Left ventricle myocardium superior (tissue), 1 donor: ENCODE measurements at regions of chr12 and their contacts with region 1.

Region 1: GRCh38 chr12:59431266-59431665 is 164.6 kb upstream of the SLC16A7 start:
- DNase-seq: no peak
- ATAC-seq: no peak

Region 2: DNA sequence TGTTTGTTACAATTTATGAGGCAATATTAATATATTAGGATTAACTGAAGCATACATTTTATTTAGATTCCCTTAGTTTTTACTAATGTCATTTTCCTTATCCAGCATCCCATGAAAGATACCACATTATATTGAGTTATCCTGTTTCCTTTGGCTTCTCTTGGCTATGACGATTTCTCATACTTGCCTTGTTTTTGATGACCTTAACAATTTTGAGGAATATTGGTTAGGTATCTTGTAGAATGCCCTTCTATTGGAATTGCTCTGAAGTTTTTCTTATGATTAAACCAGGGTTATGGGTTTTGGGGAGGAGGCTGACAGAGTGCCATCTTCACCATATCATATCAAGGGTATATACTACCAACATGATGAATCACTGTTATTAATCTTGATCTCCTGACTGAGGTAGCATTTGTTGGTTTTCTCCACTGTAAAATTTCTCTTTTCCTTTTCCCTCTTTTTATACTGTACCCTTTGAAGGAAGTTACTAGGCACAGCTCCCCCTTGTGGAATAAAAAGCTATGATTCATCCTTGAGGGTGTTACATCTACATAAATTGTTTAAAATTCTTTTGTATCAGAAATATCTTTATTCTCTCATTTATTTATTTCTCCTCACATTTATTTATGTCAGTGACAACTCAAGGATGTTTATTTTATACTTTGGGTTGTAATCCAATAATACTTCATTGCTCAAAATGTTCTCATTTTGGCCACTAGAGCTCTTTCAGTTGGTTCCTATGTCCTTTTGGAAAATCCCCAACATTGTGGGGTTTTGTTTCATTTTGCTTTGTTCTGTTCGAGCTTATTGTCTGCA is 403.6 kb after region 1 on chr12:
- intact Hi-C with region 1: loop called (anchors 10 kb)
- DNase-seq: no peak
- ATAC-seq: peak; percentile 36